Left ventricle myocardium superior (tissue), 1 donor: ENCODE measurements at regions of chr10 and their contacts with region 1.

Region 1: DNA sequence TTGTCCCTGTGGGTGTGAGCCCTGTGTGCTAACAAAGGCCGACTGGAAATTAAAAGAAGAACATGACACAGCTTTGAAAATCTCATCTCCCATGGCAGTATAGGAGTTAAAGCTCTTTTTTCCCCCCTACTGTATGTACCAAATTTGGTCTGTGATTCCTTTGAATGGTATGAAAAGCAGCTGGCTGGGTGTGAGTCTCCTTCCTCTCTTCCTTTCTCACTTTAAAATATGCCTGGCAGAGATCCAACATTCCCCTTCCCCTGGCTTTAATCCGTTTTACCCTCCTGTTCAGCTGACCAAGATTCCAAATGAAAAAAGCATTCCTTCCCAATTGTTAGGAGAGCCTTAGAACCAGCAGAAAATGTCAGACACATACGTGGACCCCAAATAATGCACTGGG is 225.0 kb upstream of the CELF2 start:
- DNase-seq: no peak
- ATAC-seq: peak; percentile 37

Region 2: GRCh38 chr10:10911471-10911921 is 118.8 kb after region 1 on chr10:
- intact Hi-C with region 1: loop called (anchors 10 kb)
- DNase-seq: peak; percentile 72
- ATAC-seq: peak; percentile 80